ENCODE measurements at regions of chr3 and their contacts with region 1.

Region 1: DNA sequence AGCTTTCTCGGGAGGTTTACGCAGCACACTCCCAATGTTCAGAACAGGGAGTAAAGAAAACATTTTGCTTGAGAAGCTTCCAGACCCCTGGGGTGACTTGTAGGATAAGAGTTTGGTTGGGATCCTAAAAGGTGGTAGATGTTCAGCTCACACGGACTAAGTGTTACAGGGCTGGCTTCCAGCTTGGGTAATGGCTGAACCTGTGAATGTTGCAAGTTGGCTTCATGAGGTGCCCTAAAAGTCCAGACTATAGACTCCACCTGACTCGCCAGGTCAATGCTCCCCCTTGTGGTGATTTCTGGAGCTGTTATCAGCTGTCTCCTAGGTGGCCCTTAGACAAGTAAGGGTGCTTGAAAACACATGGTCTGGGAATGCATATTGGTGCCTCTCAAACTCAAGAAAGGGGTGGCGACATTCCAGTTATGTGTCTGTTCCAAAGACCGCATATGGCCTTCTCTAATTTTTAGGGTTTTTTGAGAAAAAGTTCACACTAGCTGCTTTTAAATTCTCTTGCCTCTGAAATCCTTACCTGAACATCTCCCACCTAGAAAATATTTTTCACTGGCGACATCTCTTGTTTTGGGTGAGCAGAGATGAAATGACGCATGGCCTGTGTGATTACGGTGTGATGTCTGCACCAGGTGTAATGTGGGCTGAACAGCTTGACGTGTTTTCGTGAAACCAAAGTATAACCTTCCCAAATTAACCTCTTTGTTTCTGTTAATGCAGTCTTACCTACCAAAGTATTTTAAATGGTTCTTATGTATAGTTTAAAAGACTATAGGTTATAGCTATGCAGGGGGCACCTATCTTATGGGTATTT is 175.7 kb upstream of the KBTBD8 start:
- DNase-seq: no peak

Region 2: GRCh38 chr3:66253790-66254620 is 568.4 kb before region 1 on chr3:
- intact Hi-C with region 1: loop called (anchors 5 kb)
- DNase-seq: no peak

Region 3: GRCh38 chr3:66762916-66763710 is 59.3 kb before region 1 on chr3:
- intact Hi-C with region 1: no loop called
- DNase-seq: no peak

Measured in cardiac septum (tissue), 1 donor.